Activated B cell treated with CpG ODN at 0.5 μM for 24 hours (primary cell): ENCODE measurements at regions of chr16 and their contacts with region 1.

Region 1: GRCh38 chr16:2500918-2501750 is 12.6 kb upstream of the ATP6V0C start:
- DNase-seq: peak; percentile 77
- ATAC-seq: peak; percentile 98
- H3K4me3 Mint-ChIP-seq: no peak overlapping the region
- H3K27ac Mint-ChIP-seq: no peak overlapping the region
- H3K4me1 Mint-ChIP-seq: peaks cover 11% of the 10 kb centered on the region
- H3K27me3 Mint-ChIP-seq: no peaks in the 10 kb centered on the region
- CTCF ChIP-seq: peak; percentile 84

Region 2: DNA sequence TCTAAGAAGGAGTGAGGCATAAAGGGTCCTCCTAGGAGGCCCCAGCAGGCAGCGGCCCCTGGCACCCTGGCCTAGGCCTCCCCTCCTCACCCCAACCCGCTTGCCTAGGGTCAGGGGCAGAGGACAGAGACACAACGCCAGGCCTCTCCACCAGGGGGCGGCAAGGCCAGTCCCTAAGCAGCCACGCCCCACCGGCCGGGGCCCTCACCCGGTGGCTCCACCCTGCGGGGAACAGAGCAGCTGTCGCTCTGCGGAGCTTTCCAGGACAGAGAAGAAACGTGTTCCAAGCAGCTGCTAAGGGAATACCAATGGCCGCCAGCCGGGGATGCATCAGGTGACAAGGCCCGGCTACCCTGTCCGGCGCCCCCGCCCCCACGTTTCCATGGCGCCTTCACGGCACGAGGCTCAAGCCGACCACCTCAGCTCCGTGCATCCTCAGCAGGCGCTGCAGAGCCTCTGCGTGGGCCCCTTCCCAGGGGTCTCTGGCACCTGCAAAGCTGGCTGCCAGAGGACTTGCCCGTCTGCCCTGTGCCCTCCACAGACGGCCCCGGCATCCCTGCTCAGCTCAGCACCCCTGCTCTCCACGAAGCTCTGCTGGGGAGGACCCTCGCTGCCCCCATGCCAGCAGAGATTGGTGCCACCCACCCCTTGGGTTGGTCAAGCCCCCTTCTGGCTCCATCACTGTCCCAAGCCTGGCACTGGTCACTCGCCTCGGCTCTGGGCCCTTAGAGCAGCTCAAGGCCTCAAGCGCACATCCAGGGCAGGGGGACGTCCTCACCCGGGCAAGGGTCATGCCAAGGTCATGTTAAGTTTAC is 497.1 kb before region 1 on chr16:
- CTCF ChIA-PET with region 1: no interaction called
- POLR2A ChIA-PET with region 1: interaction called, 4 read pairs
- intact Hi-C with region 1: loop called (anchors 5 kb)
- DNase-seq: peak; percentile 80
- ATAC-seq: peak; percentile 99
- H3K4me3 Mint-ChIP-seq: no peak overlapping the region
- H3K27ac Mint-ChIP-seq: no peak overlapping the region
- H3K4me1 Mint-ChIP-seq: peaks cover 38% of the 10 kb centered on the region
- H3K27me3 Mint-ChIP-seq: no peaks in the 10 kb centered on the region
- CTCF ChIP-seq: peak; percentile 47

Region 3: GRCh38 chr16:2023098-2023925 is 477.8 kb before region 1 on chr16:
- CTCF ChIA-PET with region 1: interaction called, 3 read pairs
- POLR2A ChIA-PET with region 1: no interaction called
- intact Hi-C with region 1: loop called (anchors 1 kb)
- DNase-seq: peak; percentile 97
- ATAC-seq: peak; percentile 94
- H3K4me3 Mint-ChIP-seq: peak overlapping the region; percentile 79
- H3K27ac Mint-ChIP-seq: peak overlapping the region; percentile 73
- H3K4me1 Mint-ChIP-seq: peaks cover 24% of the 10 kb centered on the region
- H3K27me3 Mint-ChIP-seq: peaks cover 27% of the 10 kb centered on the region
- CTCF ChIP-seq: peak; percentile 82

Region 4: DNA sequence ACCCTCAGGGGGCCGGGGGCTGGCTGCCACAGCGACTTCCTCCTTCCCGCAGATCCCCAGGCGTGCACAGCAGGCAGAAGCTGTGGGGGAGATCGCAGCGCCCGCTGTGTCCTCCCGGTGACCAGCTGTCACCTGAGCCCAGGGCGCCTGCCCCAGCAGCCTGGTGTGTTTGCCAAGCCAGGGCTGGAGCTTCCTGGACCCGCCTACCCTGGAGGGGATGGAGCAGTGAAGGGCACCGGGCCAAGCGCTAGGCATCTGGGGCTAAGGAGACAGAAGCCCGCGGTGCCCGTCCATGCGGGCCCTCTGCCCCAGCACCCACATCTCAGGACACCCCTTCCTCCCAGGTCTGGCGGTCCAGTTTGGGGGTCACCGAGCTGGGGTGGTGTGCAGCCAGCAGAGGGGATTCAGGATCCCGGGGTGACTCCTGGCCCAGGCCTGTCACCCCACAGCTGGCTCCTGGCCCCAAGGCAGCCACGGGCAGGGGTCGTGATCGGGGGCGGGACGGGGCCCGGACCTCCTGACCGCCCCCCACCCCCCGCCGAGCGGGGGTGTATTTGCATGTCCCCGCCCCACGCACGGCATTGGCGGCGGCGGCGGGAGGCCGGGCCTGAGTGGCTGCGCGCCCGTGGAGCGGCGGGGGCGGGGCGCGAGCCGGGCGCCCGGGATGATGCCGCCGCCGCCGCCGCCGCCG is 353.0 kb before region 1 on chr16 and contains the start of gene RAB26:
- CTCF ChIA-PET with region 1: no interaction called
- POLR2A ChIA-PET with region 1: interaction called, 10 read pairs
- intact Hi-C with region 1: no loop called
- DNase-seq: peak; percentile 66
- ATAC-seq: peak; percentile 79
- H3K4me3 Mint-ChIP-seq: peak within 1 kb of the TSS; percentile 41
- H3K27ac Mint-ChIP-seq: no peak within 1 kb of the TSS
- H3K4me1 Mint-ChIP-seq: peaks cover 30% of the 10 kb centered on the region
- H3K27me3 Mint-ChIP-seq: no peaks in the 10 kb centered on the region
- CTCF ChIP-seq: no peak
- total RNA-seq, gene RAB26: 0.61 TPM in 1 of 2 replicates, not detected in the other

Region 5: DNA sequence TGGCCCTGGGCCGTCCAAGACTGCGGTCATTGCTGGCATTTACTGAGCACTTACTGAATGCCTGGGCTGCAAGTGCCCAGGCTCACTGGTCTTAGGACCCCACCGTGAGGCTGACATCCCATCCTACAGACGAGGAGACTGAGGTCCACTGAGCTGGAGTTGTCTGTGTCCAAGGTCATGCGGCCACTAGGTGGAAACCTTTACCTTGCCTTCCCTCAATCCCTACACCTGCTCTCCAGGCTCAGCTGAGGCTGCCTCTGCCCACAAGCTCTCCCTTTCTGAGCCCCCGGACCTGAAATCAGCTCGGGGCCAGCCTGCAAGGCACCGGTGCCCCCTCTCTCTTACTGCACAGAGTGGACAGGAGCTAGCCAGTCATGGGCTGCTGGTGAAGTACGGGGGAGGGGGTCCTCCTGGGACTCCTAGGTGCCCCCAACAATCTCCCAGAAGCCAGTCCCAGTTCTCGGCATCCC is 306.2 kb before region 1 on chr16:
- CTCF ChIA-PET with region 1: interaction called, 17 read pairs
- POLR2A ChIA-PET with region 1: interaction called, 4 read pairs
- intact Hi-C with region 1: loop called (anchors 1 kb)
- DNase-seq: no peak
- ATAC-seq: peak; percentile 76
- H3K4me3 Mint-ChIP-seq: peak overlapping the region; percentile 56
- H3K27ac Mint-ChIP-seq: no peak overlapping the region
- H3K4me1 Mint-ChIP-seq: peaks cover 8% of the 10 kb centered on the region
- H3K27me3 Mint-ChIP-seq: peaks cover 19% of the 10 kb centered on the region
- CTCF ChIP-seq: no peak

Region 6: DNA sequence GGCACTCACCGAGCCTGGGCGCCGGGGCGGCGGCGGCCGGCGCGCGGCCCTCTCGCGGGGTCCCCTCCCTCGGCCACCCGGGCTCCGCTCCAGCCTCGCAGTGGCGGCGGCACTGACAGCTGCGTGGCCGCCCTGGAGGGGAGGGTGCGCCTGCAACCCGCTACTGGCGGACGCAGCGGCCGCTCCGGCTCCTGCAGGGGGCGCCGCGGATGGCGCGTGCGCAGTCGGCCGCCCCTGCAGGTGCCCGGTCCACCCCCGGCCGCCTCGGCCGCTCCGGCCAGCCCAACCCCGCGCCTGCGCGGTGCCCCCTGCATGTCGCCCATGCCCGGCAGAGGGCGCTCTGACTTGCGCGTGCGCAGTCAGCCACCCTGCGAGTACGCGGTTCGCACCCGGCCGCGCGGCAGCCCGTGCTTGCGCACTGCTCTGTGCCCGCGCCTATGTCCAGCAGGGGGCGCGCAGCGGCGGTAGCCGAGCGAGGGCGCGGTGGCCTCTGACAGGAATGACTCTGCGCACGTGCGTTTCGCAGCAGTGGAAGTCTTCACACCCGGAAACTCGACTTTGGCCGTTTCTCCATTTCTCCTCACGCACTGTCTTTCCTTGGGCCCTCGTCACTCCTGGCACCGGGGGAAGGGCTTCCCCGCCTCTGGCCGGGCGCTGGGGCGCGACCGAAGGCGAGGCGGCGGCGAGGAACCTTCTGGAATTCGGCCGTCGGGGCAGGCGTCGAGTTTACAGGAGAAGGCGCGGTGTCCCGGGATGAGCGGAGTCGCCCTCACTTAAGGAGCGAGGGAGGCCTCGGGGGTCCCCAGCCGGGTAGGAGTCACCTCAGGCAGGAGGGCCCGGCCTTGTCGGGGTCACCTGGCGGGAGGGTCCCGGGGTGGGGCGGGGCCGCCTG is 160.3 kb before region 1 on chr16 and contains the start of gene ABCA3:
- CTCF ChIA-PET with region 1: interaction called, 3 read pairs
- POLR2A ChIA-PET with region 1: no interaction called
- intact Hi-C with region 1: loop called (anchors 1 kb)
- DNase-seq: peak; percentile 99
- ATAC-seq: peak; percentile 84
- H3K4me3 Mint-ChIP-seq: peak within 1 kb of the TSS; percentile 79
- H3K27ac Mint-ChIP-seq: peak within 1 kb of the TSS; percentile 66
- H3K4me1 Mint-ChIP-seq: peaks cover 13% of the 10 kb centered on the region
- H3K27me3 Mint-ChIP-seq: no peaks in the 10 kb centered on the region
- CTCF ChIP-seq: peak; percentile 95
- total RNA-seq, gene ABCA3: 2.4 and 3.1 TPM in 2 replicates

Region 7: DNA sequence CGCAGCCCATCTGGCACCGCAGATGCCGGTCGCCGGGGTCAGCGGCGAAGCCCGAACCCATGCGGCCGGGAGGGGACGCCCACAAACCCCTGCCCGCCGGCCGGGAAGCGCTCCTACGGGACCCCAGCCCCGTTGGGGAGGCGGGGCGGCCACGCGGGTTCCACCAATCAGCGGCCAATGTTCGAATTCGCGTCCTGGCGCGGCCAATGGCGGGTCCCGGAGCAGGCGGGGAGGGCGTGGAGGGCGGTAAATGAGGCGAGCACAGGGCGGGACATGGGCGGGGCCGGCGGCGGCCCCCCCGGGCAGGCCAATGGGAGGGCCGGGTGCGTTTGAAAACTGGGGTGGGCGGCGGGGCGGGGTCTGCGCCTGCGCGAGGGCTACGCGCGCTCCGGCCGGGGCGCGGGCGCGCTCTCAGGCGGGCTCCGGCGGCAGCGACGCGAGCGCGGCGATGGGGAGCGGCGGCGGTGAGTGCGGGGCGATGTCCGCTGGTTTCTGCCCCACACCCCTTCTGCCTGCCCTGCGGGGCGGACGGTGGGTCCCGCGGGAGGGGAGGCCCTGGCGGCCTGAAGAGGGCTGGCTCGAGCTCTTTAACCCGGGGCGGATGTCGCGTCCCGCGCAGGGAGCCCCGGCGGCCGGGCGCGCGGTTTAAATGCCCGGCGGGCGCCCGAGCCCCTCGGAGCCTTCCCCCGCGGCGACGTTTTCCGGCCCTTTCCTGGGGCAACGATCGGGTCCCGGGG is 71.9 kb before region 1 on chr16 and contains the start of gene CCNF:
- CTCF ChIA-PET with region 1: interaction called, 9 read pairs
- POLR2A ChIA-PET with region 1: no interaction called
- intact Hi-C with region 1: loop called (anchors 1 kb)
- DNase-seq: peak; percentile 91
- ATAC-seq: peak; percentile 97
- H3K4me3 Mint-ChIP-seq: peak within 1 kb of the TSS; percentile 85
- H3K27ac Mint-ChIP-seq: peak within 1 kb of the TSS; percentile 56
- H3K4me1 Mint-ChIP-seq: peaks cover 16% of the 10 kb centered on the region
- H3K27me3 Mint-ChIP-seq: no peaks in the 10 kb centered on the region
- CTCF ChIP-seq: no peak
- total RNA-seq, gene CCNF: 5.3 and 5.5 TPM in 2 replicates